Prostate gland (tissue), 2 donors: ENCODE measurements at regions of chr2 and their contacts with region 1.

Region 1: GRCh38 chr2:153478334-153479261 is at the start of gene RPRM:
- DNase-seq: peak; percentile 51
- H3K4me3 ChIP-seq: peak within 1 kb of the TSS; percentile 34 to 43
- H3K27ac ChIP-seq: peak within 1 kb of the TSS in 1 of 2 donors; percentile 38
- H3K4me1 ChIP-seq: no peaks in the 10 kb centered on the region
- H3K27me3 ChIP-seq: no peaks in the 10 kb centered on the region
- CTCF ChIP-seq: peak; percentile 74 to 89 (median 78)
- POLR2A ChIP-seq: no peak
- total RNA-seq, gene RPRM: 2.5 to 4.9 TPM

Region 2: GRCh38 chr2:152925547-152926327 is 552.9 kb before region 1 on chr2:
- intact Hi-C with region 1: loop called (anchors 5 kb)
- DNase-seq: peak; percentile 62
- H3K4me3 ChIP-seq: no peak overlapping the region
- H3K27ac ChIP-seq: no peak overlapping the region
- H3K4me1 ChIP-seq: no peaks in the 10 kb centered on the region
- H3K27me3 ChIP-seq: no peaks in the 10 kb centered on the region
- CTCF ChIP-seq: peak in 3 of 4 experiments; percentile 33 to 58 (median 55)
- POLR2A ChIP-seq: no peak

Region 3: DNA sequence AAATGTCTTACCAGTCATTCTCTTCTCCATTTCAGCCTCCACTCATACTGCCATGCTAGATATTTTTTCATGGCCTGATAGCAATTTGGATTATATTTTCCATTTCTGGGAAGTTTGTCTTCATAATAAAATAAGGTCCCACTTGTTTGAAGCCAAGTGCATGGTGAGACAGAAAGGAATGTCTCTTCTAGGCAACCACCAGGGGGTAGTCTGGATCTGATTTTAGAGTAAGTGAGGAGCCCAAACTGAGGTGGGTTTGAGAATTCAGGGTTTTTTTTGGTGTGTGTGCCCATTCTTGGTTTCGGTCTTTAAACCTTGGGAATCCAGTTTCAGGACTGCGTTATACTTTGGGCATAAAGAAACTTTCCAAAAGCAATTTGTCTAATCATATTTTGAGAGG is 315.5 kb before region 1 on chr2:
- intact Hi-C with region 1: loop called (anchors 5 kb)
- DNase-seq: peak; percentile 9
- H3K4me3 ChIP-seq: no peak overlapping the region
- H3K27ac ChIP-seq: no peak overlapping the region
- H3K4me1 ChIP-seq: no peaks in the 10 kb centered on the region
- H3K27me3 ChIP-seq: no peaks in the 10 kb centered on the region
- CTCF ChIP-seq: peak in 3 of 4 experiments; percentile 43 to 48 (median 47)
- POLR2A ChIP-seq: no peak

Region 4: DNA sequence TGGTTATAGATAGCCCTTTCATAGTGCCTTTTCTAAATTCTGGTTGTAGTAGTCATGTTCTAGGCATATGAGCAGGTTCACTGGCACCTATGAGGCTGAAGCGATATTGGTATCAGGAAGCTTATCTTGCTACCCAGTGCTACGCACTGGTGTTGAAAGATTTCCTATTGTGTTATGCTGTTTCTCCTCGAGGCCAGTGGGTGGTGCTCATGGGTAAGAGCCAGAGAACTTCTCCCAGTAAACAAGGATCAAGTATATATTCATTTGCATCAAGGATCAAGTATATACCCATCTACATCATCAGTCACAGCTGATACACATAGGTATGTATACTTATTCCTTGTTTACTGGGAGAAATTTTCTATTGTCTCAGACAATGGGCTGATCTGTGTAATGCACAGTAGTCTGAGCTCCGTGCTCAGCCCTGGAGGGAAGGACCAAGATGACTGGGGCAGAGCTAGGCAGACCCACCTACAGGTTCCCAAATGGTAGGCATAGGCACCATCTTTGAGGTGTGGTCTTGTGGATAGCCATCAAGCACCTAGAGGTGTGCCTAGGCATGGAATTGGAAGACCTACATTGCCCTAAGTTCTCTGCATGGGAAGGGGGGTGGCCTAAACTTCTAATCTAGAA is 291.9 kb after region 1 on chr2:
- intact Hi-C with region 1: no loop called
- DNase-seq: no peak
- H3K4me3 ChIP-seq: no peak overlapping the region
- H3K27ac ChIP-seq: no peak overlapping the region
- H3K4me1 ChIP-seq: no peaks in the 10 kb centered on the region
- H3K27me3 ChIP-seq: no peaks in the 10 kb centered on the region
- CTCF ChIP-seq: no peak
- POLR2A ChIP-seq: no peak